SK-N-SH (cell line): ENCODE measurements at regions of chr1 and their contacts with region 1.

Region 1: DNA sequence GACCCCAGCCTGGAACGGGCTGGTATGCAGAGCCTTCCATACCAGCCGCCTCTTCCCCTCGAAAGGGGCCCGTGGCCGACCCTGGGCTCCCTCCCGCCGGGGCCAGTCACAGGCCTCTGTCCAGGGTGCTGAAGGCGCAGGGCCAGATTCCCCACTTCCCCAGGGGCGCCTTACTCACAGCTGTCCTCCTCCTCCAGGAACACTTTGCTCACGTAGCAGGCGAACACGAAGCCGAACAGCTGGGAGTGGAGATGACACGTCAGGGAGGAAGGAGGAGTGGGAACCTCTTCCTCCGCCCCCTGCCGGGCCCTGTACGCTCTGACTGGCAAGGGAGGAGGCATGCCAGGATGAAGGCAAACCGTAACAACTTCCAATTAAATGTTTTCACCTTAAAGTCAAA is 57.3 kb downstream of the NKAIN1 start:
- DNase-seq: peak; percentile 39
- H3K4me3 ChIP-seq: no peak overlapping the region
- H3K27ac ChIP-seq: no peak overlapping the region
- H3K4me1 ChIP-seq: no peaks in the 10 kb centered on the region; a peak in 1 of 4 replicates
- H3K27me3 ChIP-seq: no peaks in the 10 kb centered on the region
- CTCF ChIP-seq: no peak
- EP300 ChIP-seq: no peak
- RAD21 ChIP-seq: no peak

Region 2: DNA sequence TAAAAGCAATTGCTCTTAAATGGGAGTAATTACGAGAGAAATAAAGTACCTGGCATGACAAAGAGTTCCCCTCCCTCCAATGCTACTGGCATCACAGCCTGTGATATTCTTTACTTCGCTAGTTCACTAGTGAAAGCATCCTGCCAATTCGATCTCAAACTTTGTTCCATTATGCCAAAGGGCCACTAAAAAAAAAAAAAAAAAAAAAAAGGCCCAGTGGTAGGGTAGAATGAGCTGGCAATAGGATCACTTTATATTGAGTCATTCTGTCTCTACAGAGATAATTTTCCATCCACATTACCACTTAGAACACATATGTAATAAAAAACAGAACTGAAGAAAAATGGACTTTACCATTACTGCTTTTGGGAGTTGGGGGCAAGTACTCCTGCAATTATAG is 128.0 kb before region 1 on chr1:
- CTCF ChIA-PET with region 1: no interaction called
- POLR2A ChIA-PET with region 1: no interaction called
- DNase-seq: no peak
- H3K4me3 ChIP-seq: no peak overlapping the region
- H3K27ac ChIP-seq: peak overlapping the region in 1 of 2 experiments; percentile 63; a peak in 2 of 4 replicates
- H3K4me1 ChIP-seq: no peaks in the 10 kb centered on the region; a peak in 1 of 4 replicates
- H3K27me3 ChIP-seq: no peaks in the 10 kb centered on the region
- CTCF ChIP-seq: no peak
- EP300 ChIP-seq: no peak
- RAD21 ChIP-seq: no peak

Region 3: DNA sequence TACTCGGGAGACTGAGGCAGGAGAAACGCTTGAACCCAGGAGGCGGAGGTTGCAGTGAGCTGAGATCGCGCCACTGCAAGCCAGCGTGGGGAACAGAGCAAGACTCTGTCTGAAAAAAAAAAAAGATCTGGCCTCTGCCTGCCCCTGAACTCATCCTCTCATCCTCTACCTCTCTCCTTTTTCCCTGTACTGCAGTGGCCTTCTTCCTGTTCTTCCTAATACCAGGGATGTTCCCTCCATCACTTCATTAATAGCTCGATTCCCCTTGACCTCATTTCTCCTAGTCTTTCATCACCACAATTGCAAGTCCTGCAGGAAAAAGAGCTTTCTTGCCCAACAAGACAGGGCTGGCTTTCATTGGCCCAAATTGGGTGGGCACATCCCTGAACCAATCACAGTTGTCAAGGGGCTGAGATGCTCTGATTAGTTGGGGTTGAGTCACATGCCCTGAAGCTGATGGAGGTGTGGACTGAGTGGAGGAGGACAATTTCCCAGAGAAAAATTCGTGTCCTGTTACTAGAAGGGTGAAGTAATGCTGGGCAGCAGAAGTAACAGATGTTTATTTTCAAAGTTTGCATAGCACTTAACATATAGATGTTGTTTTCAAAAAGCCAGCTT is 30.1 kb before region 1 on chr1:
- CTCF ChIA-PET with region 1: interaction called, 224 read pairs
- POLR2A ChIA-PET with region 1: no interaction called
- DNase-seq: no peak
- H3K4me3 ChIP-seq: no peak overlapping the region
- H3K27ac ChIP-seq: no peak overlapping the region
- H3K4me1 ChIP-seq: no peaks in the 10 kb centered on the region
- H3K27me3 ChIP-seq: no peaks in the 10 kb centered on the region
- CTCF ChIP-seq: no peak
- EP300 ChIP-seq: no peak
- RAD21 ChIP-seq: no peak

Region 4: GRCh38 chr1:31222176-31222575 is 39.8 kb after region 1 on chr1:
- CTCF ChIA-PET with region 1: interaction called, 49 read pairs
- POLR2A ChIA-PET with region 1: no interaction called
- DNase-seq: no peak
- H3K4me3 ChIP-seq: no peak overlapping the region
- H3K27ac ChIP-seq: no peak overlapping the region
- H3K4me1 ChIP-seq: peaks cover 0 to 28% of the 10 kb centered on the region in 2 experiments; a peak in 1 of 4 replicates
- H3K27me3 ChIP-seq: peaks cover 5% of the 10 kb centered on the region; the same call in 1 of the 2 replicates
- CTCF ChIP-seq: no peak
- EP300 ChIP-seq: no peak
- RAD21 ChIP-seq: no peak; the same call in 1 of the 2 replicates

Region 5: GRCh38 chr1:31272369-31272768 is 90.0 kb after region 1 on chr1:
- CTCF ChIA-PET with region 1: interaction called, 28 read pairs
- POLR2A ChIA-PET with region 1: no interaction called
- DNase-seq: no peak
- H3K4me3 ChIP-seq: no peak overlapping the region
- H3K27ac ChIP-seq: no peak overlapping the region
- H3K4me1 ChIP-seq: no peaks in the 10 kb centered on the region; a peak in 1 of 4 replicates
- H3K27me3 ChIP-seq: no peaks in the 10 kb centered on the region
- CTCF ChIP-seq: no peak
- EP300 ChIP-seq: no peak
- RAD21 ChIP-seq: no peak

Region 6: GRCh38 chr1:31327381-31327780 is 145.0 kb after region 1 on chr1:
- CTCF ChIA-PET with region 1: interaction called, 112 read pairs
- POLR2A ChIA-PET with region 1: no interaction called
- DNase-seq: no peak
- H3K4me3 ChIP-seq: no peak overlapping the region
- H3K27ac ChIP-seq: no peak overlapping the region
- H3K4me1 ChIP-seq: no peaks in the 10 kb centered on the region
- H3K27me3 ChIP-seq: no peaks in the 10 kb centered on the region
- CTCF ChIP-seq: no peak
- EP300 ChIP-seq: no peak
- RAD21 ChIP-seq: no peak

Region 7: DNA sequence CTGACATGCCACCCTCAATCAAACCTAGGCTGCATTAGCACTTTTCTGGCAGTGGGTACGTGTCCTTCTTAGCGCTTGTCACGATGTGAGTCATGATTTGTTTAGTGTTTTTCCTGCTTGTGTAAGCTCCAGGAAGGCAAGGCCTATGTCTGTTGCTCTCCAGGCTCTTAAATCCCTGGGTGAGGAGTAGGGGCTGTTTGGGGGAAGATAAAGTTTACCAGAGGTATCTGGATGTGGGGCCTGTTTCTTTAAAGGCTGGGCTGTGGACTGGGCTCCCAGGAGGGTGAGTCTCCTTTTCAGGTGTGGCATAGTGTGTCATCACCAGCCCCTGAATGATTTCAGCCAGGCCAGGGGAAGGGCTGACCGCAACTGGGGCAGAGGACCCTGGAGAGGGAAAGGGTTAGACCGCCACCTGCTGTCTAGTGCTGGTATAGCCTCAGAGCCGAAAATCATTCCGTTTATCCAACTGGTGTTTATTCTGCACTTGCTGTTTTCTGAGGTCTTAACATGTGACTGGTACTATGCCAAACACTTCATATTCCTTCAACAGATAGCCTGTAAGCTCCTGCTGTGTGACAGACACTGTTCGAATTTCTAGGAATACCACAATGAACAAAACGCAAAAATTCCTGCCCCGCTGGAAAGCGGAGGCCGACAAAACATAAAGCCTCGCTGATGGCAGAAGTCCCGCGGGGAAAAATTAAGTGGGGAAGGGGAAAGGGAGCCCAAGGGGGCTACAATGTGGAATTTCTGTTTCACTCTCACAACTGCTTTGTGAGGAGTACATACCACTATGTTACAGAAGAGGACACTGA is 240.4 kb after region 1 on chr1:
- CTCF ChIA-PET with region 1: interaction called, 213 read pairs
- POLR2A ChIA-PET with region 1: no interaction called
- DNase-seq: peak; percentile 89
- H3K4me3 ChIP-seq: no peak overlapping the region; a peak in 1 of 4 replicates
- H3K27ac ChIP-seq: 0 out of 4 replicates have a peak overlapping the region, but pooled peaks of 1 of the 2 experiments have one; percentile 19
- H3K4me1 ChIP-seq: no peaks in the 10 kb centered on the region; a peak in 1 of 4 replicates
- H3K27me3 ChIP-seq: no peaks in the 10 kb centered on the region
- CTCF ChIP-seq: peak; percentile 95
- EP300 ChIP-seq: no peak
- RAD21 ChIP-seq: peak; percentile 98